ENCODE measurements at regions of chrX and their contacts with region 1.

Region 1: GRCh38 chrX:23907498-23908218 is at the starts of genes APOO and CXorf58:
- DNase-seq: peak; percentile 99

Region 2: DNA sequence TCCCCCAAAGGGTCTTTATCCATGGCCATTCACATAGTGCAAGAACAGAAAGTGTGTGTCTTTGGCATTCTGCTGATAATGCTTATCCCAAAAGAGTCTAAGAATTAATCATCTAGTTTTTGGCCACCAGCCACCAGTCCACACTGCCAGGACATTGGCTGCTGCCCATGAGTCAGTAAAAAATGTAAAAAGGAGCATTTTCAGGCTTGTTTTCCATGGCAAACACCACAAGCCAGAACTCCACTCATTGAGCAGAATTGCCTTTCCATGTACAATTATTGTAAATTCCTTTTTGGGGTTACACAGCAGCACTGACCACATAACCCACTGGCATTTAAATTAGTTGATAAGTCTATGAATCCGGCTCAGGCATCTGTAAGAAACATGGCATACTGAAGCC is 329.6 kb before region 1 on chrX:
- in situ Hi-C with region 1: no loop called
- DNase-seq: no peak

Region 3: GRCh38 chrX:23673108-23673507 is 234.6 kb before region 1 on chrX:
- in situ Hi-C with region 1: no loop called
- DNase-seq: no peak

Region 4: DNA sequence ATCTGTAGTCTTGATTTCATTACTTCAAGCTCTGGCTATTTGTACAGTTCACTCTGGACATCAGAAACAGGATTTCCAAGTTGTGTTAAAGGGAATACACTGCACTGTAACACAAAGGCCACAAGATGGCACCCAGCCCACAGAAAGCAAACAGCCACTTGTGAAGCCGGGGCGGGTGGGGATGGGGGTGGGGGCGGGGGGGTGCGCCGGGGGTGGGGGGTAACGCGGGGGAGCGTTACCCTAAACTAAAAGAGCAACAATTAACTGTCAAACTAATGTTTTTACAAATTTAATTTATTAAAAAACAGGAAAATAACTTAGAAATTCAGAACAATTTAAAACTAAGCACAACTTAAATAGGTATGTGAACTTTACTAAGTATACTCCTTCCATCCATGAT is 213.1 kb before region 1 on chrX:
- in situ Hi-C with region 1: loop called (anchors 10 kb)
- DNase-seq: peak; percentile 55

Measured in KBM-7 (cell line).